ENCODE measurements at regions of chr5 and their contacts with region 1.

Region 1: DNA sequence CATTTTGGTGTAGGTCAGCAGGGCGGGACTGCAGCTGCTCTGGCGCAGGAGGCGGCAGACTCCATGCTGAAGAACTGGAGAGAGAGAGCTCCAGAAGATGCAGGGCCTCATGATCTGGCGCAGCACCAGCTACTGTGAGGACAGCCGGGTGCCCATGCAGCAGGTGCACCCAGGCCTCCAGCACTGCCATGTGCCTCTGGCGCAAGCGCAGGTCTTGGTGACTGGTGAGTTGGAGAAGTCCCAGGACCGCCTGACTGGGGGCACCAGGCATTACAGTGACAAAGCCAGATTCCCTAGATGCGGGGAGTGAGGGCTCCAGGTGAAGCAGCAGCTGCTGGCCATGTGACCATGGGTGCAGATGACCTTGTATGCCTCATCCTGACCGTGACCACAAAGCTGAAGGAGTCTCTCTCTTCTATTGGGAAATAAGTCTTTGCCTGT is 24.3 kb upstream of the EXOC3 start:
- DNase-seq: no peak
- H3K4me3 ChIP-seq: no peak overlapping the region
- H3K27ac ChIP-seq: no peak overlapping the region
- H3K4me1 ChIP-seq: no peaks in the 10 kb centered on the region
- H3K27me3 ChIP-seq: no peaks in the 10 kb centered on the region
- CTCF ChIP-seq: no peak
- POLR2A ChIP-seq: no peak

Region 2: GRCh38 chr5:337563-338130 is 81.1 kb before region 1 on chr5:
- intact Hi-C with region 1: loop called (anchors 10 kb)
- DNase-seq: peak; percentile 5
- H3K4me3 ChIP-seq: no peak overlapping the region
- H3K27ac ChIP-seq: no peak overlapping the region
- H3K4me1 ChIP-seq: no peaks in the 10 kb centered on the region
- H3K27me3 ChIP-seq: no peaks in the 10 kb centered on the region
- CTCF ChIP-seq: no peak
- POLR2A ChIP-seq: no peak